SK-MEL-5 (cell line): ENCODE measurements at regions of chr3 and their contacts with region 1.

Region 1: DNA sequence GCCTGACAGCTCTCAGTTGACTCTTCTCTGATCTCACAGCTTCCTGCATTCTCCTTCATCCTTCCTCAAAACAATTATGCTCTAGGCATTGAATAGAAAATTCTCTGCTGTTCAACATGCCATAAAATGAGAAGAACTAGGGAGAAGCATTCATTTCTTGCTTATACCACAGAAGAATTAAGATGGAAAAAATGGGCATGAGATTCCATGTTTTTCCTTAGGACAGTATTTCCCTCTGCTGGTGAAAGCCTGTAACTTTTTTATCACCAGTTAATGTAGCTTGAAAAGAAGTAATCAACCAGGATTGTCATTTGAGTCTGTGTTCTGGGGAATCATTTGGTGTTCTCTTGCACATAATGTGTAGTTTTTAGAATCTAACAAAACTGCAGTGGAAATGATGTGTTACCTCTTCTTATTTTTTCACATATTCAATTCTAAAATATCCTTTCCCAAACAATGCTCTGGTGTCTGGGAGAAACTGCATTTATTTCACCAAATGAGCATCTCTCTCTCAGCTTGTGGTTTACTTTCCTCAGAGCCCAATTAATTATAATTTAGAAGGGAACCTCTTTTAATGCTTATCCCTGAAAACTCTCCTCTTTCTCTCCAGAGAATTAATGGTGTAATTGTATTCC is 92.8 kb upstream of the DCBLD2 start:
- DNase-seq: peak; percentile 66

Region 2: DNA sequence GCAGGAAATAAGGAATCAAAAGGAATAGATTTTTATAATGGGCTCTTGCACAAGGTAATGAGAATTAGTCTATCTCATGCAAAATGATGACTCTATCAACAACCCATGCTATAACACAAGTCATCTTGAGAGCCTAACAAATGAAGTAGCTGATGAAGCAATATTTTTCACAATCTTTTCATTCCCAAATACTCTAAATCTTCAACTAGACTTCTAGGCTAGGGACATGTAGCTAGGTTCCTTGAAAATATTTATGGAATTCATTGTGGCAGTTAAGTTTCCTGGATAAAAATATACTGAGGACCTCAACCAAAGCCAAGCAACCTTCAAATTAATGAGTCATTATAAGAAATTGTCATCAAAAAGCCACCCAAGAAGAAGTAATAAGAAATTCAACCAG is 148.1 kb before region 1 on chr3:
- in situ Hi-C with region 1: loop called (anchors 25 kb)
- DNase-seq: no peak

Region 3: GRCh38 chr3:99084826-99085225 is 90.6 kb after region 1 on chr3:
- in situ Hi-C with region 1: no loop called
- DNase-seq: no peak

Region 4: GRCh38 chr3:99114565-99115291 is 120.5 kb after region 1 on chr3:
- in situ Hi-C with region 1: no loop called
- DNase-seq: peak; percentile 83

Region 5: GRCh38 chr3:99256788-99257187 is 262.5 kb after region 1 on chr3:
- in situ Hi-C with region 1: no loop called
- DNase-seq: no peak